Activated naive CD4-positive, alpha-beta T cell treated with anti-CD3 and anti-CD28 coated beads for 36 hours (primary cell): ENCODE measurements at regions of chr22 and their contacts with region 1.

Region 1: DNA sequence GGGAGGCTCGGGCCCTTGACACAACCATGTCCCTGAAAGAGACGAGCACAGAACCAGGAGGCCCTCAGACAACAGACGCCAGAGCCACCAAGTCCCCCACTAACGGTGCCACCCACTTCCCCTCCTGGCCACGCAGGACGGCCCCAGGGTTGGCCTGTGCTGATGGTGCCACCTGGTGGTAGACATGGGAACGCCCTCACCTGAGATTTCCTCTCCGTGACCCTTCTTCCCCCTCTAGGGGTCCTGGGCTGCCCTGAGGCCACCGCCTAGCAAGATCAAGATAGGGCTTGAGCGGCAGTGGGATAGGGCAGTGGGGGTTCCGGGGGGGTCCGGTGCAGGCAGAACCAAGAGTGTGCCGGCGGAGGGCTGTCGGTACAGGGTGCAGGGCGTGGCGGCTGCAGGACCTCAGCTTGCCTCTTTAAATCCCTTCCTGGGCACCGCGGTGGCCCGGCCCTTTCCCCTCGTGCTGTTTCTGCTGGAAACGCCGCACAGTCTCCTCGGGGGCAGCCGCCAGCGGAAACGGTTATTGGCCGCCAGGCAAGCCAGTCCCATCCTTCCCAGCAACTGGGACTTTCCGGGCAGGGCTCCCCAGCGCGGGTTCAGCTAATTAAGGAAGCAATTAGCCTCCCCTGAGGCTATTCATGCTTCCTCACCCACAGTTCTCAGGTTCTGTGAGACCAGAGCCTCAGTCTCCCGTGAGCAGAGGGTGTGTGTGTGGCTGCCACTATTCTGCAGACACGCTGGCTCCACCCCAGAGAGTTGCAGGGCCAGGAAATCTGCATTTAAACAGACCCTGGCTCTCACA is 5.5 kb upstream of the NFAM1 start:
- DNase-seq: peak; percentile 85
- H3K4me3 Mint-ChIP-seq: peak overlapping the region; percentile 68
- H3K27ac Mint-ChIP-seq: no peak overlapping the region
- H3K4me1 Mint-ChIP-seq: peaks cover 18% of the 10 kb centered on the region
- H3K27me3 Mint-ChIP-seq: no peaks in the 10 kb centered on the region

Region 2: DNA sequence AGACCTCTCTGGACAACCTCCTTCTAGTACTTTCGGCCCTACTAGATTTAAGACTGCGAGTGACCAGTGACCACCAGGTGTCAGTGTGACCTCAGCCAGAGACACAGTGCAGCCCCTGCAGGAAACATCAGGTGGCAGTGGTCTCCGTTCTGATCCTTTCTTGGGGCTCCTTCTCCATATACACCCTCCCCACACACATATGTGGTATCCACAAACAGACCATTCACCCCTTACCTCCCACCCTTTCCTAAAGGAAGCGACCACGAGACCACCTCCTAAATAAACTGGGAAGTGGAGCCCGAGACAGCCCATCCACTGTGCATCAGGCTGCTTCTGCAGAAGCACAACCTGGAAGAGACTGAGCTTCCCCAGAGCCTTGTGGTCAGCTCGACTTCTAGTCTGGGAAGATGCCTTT is 268.6 kb before region 1 on chr22:
- CTCF ChIA-PET with region 1: interaction called, 4 read pairs
- intact Hi-C with region 1: loop called (anchors 1 kb)
- DNase-seq: peak; percentile 85
- H3K4me3 Mint-ChIP-seq: no peak overlapping the region
- H3K27ac Mint-ChIP-seq: no peak overlapping the region
- H3K4me1 Mint-ChIP-seq: peaks cover 15% of the 10 kb centered on the region
- H3K27me3 Mint-ChIP-seq: no peaks in the 10 kb centered on the region

Region 3: DNA sequence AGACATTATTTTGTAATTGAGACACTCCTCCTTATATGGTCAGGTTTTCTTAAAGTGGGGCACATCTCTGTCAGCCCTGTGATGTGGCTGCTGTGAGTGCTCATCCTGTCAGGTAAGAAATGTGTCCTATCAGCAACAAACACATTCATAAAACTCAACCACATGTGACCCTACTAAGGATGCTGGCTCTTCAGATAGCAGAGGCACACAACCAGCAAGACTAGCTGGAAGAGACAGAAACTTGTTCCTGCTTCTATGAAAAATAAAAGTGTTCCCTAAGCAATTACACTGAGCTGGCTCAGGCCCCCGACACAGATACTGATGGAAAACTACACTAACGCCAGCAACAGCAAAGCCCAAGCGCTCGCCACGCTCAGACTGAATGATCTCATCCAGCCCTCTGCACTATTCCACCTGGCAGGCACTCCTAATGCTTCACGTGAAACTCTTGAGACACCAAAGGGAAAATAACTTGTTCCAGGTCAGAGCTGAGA is 257.3 kb before region 1 on chr22:
- CTCF ChIA-PET with region 1: no interaction called
- intact Hi-C with region 1: loop called (anchors 5 kb)
- DNase-seq: peak; percentile 74
- H3K4me3 Mint-ChIP-seq: peak overlapping the region; percentile 14
- H3K27ac Mint-ChIP-seq: peak overlapping the region; percentile 73
- H3K4me1 Mint-ChIP-seq: peaks cover 92% of the 10 kb centered on the region
- H3K27me3 Mint-ChIP-seq: no peaks in the 10 kb centered on the region

Region 4: GRCh38 chr22:42277988-42278776 is 159.5 kb before region 1 on chr22:
- CTCF ChIA-PET with region 1: no interaction called
- intact Hi-C with region 1: loop called (anchors 2 kb)
- DNase-seq: no peak
- H3K4me3 Mint-ChIP-seq: no peak overlapping the region
- H3K27ac Mint-ChIP-seq: no peak overlapping the region
- H3K4me1 Mint-ChIP-seq: peaks cover 3% of the 10 kb centered on the region
- H3K27me3 Mint-ChIP-seq: peaks cover 3% of the 10 kb centered on the region

Region 5: DNA sequence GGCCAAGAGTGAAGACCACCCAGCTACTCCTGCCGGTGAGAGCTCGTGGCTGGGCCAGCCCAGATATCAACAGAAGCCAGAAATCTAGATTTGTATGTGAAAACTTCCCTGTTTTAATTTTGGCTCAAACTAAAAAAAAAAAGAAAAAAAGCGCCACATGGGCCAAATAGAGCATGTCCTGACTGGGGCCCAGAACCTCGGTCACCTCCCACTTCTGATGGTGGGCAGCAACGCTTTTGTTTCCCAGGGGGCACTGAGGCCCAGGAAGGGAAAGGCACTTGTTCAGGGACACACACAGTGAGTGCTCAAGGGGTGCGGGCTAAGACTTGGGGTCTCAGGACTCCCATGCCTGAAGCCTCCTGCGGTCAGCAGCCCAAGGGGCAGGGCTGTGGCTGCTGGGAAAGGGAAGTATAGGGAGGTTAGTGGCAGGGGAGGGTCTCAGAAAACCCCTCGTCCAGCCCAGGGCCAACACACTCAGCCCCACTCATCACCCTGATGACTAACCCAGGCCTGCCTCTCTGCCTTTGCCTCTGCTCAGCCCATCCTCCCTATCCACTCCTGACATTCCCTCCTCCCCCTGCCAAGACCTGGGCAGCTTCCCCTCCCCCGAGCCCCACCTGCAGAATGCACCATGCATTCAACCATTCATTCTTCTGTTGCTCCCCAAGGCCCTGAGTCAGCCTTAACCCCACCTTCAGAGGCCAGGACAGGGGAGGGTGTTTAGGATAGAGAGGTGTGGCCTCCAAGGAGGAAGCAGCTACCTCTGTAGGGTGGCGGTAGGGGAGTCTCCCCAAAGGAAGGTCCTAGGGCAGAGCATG is 137.2 kb before region 1 on chr22:
- CTCF ChIA-PET with region 1: interaction called, 3 read pairs
- intact Hi-C with region 1: loop called (anchors 5 kb)
- DNase-seq: peak; percentile 79
- H3K4me3 Mint-ChIP-seq: peak overlapping the region; percentile 44
- H3K27ac Mint-ChIP-seq: peak overlapping the region; percentile 72
- H3K4me1 Mint-ChIP-seq: peaks cover 86% of the 10 kb centered on the region
- H3K27me3 Mint-ChIP-seq: no peaks in the 10 kb centered on the region